Activated CD4-positive, alpha-beta memory T cell treated with anti-CD3 and anti-CD28 coated beads for 36 hours (primary cell): ENCODE measurements at regions of chr7 and their contacts with region 1.

Region 1: GRCh38 chr7:33109005-33109757 is at the start of gene RP9:
- DNase-seq: peak; percentile 83
- H3K4me3 Mint-ChIP-seq: peak within 1 kb of the TSS; percentile 90
- H3K27ac Mint-ChIP-seq: peak within 1 kb of the TSS; percentile 40
- H3K4me1 Mint-ChIP-seq: peaks cover 36% of the 10 kb centered on the region
- H3K27me3 Mint-ChIP-seq: peaks cover 2% of the 10 kb centered on the region
- total RNA-seq, gene RP9: 11.6 to 14.0 TPM

Region 2: DNA sequence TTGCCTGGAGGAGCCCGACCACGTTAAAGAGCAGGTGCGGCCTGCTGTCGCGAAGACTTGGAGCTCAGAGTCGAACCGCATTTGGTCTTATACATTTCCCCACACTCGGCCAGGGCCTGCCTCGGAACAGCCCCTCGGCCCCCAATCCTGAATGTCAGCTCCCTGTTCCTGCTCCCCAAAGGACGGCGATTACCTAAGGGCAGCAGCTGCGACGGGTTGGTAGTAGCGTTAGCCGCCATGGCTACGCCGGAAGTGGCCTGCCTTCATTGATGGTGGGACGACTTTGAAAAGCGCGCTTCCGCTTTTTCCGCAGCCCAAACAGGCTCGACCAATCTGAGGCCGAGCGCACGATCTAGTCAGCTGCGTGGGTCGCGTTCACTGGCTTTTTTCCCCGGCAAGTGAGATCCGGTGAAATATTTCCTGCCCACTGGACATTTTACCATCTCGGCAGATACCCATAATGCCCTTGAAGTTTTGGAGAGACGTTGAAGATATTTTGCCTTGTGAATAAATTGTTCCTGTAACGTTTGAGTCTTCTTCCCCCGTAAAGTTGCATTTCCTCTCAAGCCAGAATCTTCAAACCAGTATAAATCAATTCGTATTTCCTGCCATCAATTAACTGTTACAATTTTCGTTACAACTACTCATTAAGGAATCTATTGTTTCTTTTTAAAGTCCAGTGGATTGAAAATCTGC is 618.9 kb before region 1 on chr7 and contains the start of gene LSM5:
- CTCF ChIA-PET with region 1: no interaction called
- POLR2A ChIA-PET with region 1: no interaction called
- intact Hi-C with region 1: loop called (anchors 2 kb)
- DNase-seq: peak; percentile 94
- H3K4me3 Mint-ChIP-seq: peak within 1 kb of the TSS; percentile 82
- H3K27ac Mint-ChIP-seq: peak within 1 kb of the TSS; percentile 92
- H3K4me1 Mint-ChIP-seq: peaks cover 27% of the 10 kb centered on the region
- H3K27me3 Mint-ChIP-seq: no peaks in the 10 kb centered on the region
- total RNA-seq, gene LSM5: 111 to 120 TPM

Region 3: GRCh38 chr7:32803406-32804141 is 305.6 kb before region 1 on chr7:
- CTCF ChIA-PET with region 1: interaction called, 14 read pairs
- POLR2A ChIA-PET with region 1: no interaction called
- intact Hi-C with region 1: loop called (anchors 2 kb)
- DNase-seq: no peak
- H3K4me3 Mint-ChIP-seq: no peak overlapping the region
- H3K27ac Mint-ChIP-seq: no peak overlapping the region
- H3K4me1 Mint-ChIP-seq: no peaks in the 10 kb centered on the region
- H3K27me3 Mint-ChIP-seq: no peaks in the 10 kb centered on the region

Region 4: GRCh38 chr7:33040803-33041516 is 68.2 kb before region 1 on chr7:
- CTCF ChIA-PET with region 1: interaction called, 13 read pairs
- POLR2A ChIA-PET with region 1: interaction called, 3 read pairs
- intact Hi-C with region 1: no loop called
- DNase-seq: peak; percentile 74
- H3K4me3 Mint-ChIP-seq: peak overlapping the region; percentile 58
- H3K27ac Mint-ChIP-seq: peak overlapping the region; percentile 78
- H3K4me1 Mint-ChIP-seq: peaks cover 60% of the 10 kb centered on the region
- H3K27me3 Mint-ChIP-seq: no peaks in the 10 kb centered on the region

Region 5: GRCh38 chr7:33062782-33063443 is 46.3 kb before region 1 on chr7:
- CTCF ChIA-PET with region 1: interaction called, 34 read pairs
- POLR2A ChIA-PET with region 1: interaction called, 13 read pairs
- intact Hi-C with region 1: loop called (anchors 1 kb)
- DNase-seq: peak; percentile 95
- H3K4me3 Mint-ChIP-seq: peak overlapping the region; percentile 90
- H3K27ac Mint-ChIP-seq: peak overlapping the region; percentile 88
- H3K4me1 Mint-ChIP-seq: peaks cover 31% of the 10 kb centered on the region
- H3K27me3 Mint-ChIP-seq: no peaks in the 10 kb centered on the region